Mammary epithelial cell (primary cell): ENCODE measurements at regions of chr17 and their contacts with region 1.

Region 1: GRCh38 chr17:78176548-78177025 is 8.2 kb downstream of the SYNGR2 start:
- DNase-seq: peak; percentile 26
- H3K4me3 ChIP-seq: no peak overlapping the region
- H3K27ac ChIP-seq: no peak overlapping the region
- H3K4me1 ChIP-seq: peaks cover 4% of the 10 kb centered on the region
- H3K27me3 ChIP-seq: no peaks in the 10 kb centered on the region
- CTCF ChIP-seq: peak; percentile 86 to 98

Region 2: DNA sequence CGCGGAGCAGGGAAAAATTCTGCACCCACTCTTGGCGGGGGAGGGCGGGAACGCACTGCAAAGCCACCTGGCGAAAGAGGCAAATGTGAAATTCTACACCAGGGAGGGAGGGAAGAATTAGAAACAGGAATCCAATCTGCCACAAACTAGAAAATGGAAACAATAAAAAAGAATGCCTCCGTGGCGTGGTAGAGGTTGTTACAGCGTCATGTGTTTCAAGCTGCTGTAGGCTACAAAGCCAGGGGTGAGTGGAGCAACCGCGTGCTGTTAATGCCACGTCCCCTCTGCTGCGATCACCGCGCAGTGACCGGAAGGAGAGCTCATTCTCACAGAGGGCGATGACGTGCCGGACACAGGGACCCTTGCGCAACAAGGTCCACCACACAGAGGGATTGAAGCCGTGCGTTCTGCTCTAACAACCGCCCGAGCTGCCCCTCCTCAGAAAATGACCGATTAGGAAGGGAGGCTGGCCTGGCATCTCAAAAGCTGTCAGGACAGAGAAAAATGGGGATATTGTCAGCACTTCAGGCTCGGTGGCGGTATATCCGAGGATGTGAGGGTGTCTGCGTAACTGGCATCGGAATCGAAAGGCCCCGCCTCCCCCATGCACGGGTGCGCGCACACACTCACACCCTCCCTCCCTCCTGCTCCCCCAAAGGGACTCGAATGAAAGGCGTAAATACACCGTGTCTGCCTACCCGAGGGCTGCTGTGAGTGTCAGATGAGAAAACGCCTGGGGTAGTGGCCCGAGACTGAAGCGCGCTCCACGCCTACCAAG is 288.9 kb before region 1 on chr17:
- CTCF ChIA-PET with region 1: no interaction called
- dilution Hi-C with region 1: loop called (anchors 5 kb)
- in situ Hi-C with region 1: no loop called
- intact Hi-C with region 1: no loop called
- DNase-seq: peak; percentile 24
- H3K4me3 ChIP-seq: peak overlapping the region; percentile 40 to 49 (median 41)
- H3K27ac ChIP-seq: no peak overlapping the region
- H3K4me1 ChIP-seq: peaks cover 12% of the 10 kb centered on the region
- H3K27me3 ChIP-seq: no peaks in the 10 kb centered on the region
- CTCF ChIP-seq: no peak

Region 3: DNA sequence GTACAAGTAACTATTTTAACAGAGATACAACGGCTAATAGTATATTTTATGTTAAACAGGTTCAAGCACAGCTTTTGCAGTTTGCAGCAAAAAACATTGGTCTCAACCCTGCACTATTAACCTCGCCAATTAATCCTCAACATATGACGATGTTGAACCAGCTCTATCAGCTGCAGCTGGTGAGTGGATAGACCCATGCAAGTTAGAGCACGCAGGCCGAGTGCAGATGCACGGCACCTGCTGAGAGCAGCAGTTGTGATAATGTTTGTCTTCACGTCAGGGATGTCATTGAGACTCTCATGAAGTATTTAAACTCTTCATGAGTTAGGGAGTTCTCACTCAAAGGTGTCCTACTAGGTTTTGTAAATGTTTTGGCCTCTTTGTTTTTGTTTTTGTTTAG is 93.6 kb before region 1 on chr17:
- CTCF ChIA-PET with region 1: interaction called, 5 read pairs
- dilution Hi-C with region 1: no loop called
- in situ Hi-C with region 1: no loop called
- intact Hi-C with region 1: loop called (anchors 1 kb)
- DNase-seq: no peak
- H3K4me3 ChIP-seq: no peak overlapping the region
- H3K27ac ChIP-seq: no peak overlapping the region
- H3K4me1 ChIP-seq: no peaks in the 10 kb centered on the region
- H3K27me3 ChIP-seq: no peaks in the 10 kb centered on the region
- CTCF ChIP-seq: no peak

Region 4: GRCh38 chr17:78226749-78227399 is 50.3 kb after region 1 on chr17:
- CTCF ChIA-PET with region 1: no interaction called
- dilution Hi-C with region 1: loop called (anchors 5 kb)
- in situ Hi-C with region 1: no loop called
- intact Hi-C with region 1: no loop called
- DNase-seq: no peak
- H3K4me3 ChIP-seq: no peak overlapping the region
- H3K27ac ChIP-seq: no peak overlapping the region
- H3K4me1 ChIP-seq: no peaks in the 10 kb centered on the region
- H3K27me3 ChIP-seq: peaks cover 10% of the 10 kb centered on the region
- CTCF ChIP-seq: no peak